Activated CD4-positive, alpha-beta memory T cell treated with anti-CD3 and anti-CD28 coated beads, Interleukin-2, amount 10 ng/mL, durations not matched to agents 7 days and 5 days (primary cell): ENCODE measurements at regions of chr11 and their contacts with region 1.

Region 1: DNA sequence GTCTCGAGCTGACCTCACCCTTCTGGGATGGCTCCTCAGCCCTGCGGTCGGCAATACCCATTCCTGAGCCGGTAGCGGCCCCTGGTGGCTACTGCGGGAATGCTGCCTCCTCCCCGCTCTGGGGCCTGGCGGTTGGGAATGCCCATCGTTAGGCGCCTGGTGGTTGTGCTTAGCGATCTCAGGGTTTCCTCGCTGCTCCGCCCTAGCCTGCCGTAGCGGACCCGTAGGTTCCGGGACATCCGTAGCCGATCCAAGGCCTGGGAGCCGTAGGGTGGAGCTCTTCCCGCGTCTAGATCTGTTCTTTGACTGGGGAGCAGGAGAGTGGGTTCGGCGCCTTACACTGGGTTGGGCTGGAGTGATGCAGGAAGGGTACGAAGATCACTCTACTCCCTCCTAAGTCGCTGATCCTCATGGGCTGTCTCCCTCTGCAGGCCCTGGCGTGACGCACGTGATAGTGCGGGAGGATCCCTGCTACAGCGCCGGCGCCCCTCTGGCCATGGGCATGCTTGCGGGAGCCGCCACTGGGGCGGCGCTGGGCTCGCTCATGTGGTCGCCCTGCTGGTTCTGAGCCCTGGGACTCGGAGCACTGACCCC is 14.8 kb downstream of the PLEKHB1 start:
- DNase-seq: peak; percentile 83
- H3K4me3 Mint-ChIP-seq: no peak overlapping the region
- H3K27ac Mint-ChIP-seq: no peak overlapping the region
- H3K4me1 Mint-ChIP-seq: peaks cover 7% of the 10 kb centered on the region
- H3K27me3 Mint-ChIP-seq: no peaks in the 10 kb centered on the region

Region 2: DNA sequence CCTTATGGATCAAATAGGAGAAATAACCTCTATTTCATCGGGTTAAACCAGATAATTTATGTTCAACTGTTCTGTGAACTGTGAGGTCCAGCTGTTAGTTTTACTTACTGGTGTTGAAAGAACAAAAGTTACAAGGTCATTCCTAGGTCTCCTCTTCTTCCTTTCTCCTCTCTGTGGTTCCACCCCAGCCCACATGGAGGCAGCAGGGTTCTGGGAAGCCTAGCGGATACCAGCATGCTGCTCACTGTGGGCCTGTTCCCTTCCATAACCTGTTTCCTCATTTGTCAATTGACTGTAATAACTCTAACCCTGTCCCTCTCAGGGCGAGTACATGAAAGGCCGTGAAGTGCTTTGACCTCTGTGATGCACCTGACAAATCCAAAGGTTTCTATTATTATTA is 257.1 kb before region 1 on chr11:
- CTCF ChIA-PET with region 1: interaction called, 13 read pairs
- POLR2A ChIA-PET with region 1: no interaction called
- DNase-seq: no peak
- H3K4me3 Mint-ChIP-seq: no peak overlapping the region
- H3K27ac Mint-ChIP-seq: no peak overlapping the region
- H3K4me1 Mint-ChIP-seq: no peaks in the 10 kb centered on the region
- H3K27me3 Mint-ChIP-seq: no peaks in the 10 kb centered on the region

Region 3: DNA sequence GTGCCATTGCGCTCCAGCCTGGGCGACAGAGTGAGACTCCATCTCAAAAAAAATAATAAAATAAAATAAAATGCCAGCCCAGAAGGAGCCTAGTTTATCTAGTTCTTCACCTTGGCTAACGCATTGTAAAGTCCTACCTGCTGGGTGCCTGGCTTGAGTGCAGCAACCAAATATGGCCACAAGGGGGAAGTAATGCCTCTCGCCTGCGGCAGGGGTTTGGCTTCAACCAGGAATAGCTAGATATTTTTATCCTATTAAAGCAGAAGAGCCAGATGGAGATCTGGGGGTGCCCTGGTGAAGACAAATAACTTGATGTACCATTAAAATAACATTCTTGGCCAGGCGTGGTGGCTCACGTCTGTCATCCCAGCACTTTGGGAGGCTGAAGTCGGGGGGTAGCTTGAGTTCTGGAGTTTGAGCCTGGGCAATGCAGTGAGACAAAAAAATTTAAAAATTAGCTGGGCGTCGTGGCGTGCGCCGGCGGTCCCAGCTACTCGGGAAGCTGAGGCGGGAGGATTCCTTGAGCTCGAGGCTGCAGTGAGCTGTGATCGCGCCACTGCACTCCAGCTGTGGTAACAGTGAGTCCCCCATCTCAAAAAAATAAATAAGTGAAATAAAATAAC is 35.3 kb before region 1 on chr11:
- CTCF ChIA-PET with region 1: interaction called, 126 read pairs
- POLR2A ChIA-PET with region 1: interaction called, 3 read pairs
- DNase-seq: peak; percentile 67
- H3K4me3 Mint-ChIP-seq: no peak overlapping the region
- H3K27ac Mint-ChIP-seq: no peak overlapping the region
- H3K4me1 Mint-ChIP-seq: peaks cover 2% of the 10 kb centered on the region
- H3K27me3 Mint-ChIP-seq: peaks cover 22% of the 10 kb centered on the region

Region 4: GRCh38 chr11:73647459-73648100 is 13.6 kb before region 1 on chr11:
- CTCF ChIA-PET with region 1: interaction called, 20 read pairs
- POLR2A ChIA-PET with region 1: no interaction called
- DNase-seq: peak; percentile 90
- H3K4me3 Mint-ChIP-seq: peak overlapping the region; percentile 64
- H3K27ac Mint-ChIP-seq: no peak overlapping the region
- H3K4me1 Mint-ChIP-seq: peaks cover 14% of the 10 kb centered on the region
- H3K27me3 Mint-ChIP-seq: no peaks in the 10 kb centered on the region

Region 5: DNA sequence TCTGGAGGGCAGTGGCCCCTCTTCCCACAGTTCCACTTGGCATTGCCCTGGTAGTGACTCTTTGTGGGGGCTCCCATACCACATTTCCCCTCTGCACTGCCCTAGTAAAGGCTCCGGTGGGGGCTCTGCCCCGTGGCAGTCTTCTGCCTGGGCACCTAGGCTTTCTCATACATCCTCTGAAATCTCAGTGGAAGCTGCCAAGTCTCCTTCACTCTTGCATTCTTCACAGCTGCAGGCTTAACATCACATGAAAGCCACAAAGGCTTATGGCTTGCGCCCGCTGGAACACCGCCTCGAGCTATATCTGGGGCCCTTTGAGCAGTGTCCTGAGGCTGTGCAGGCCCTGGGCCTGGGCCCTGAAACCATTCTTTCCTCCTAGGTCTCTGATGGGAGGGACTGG is 10.6 kb after region 1 on chr11:
- CTCF ChIA-PET with region 1: interaction called, 15 read pairs
- POLR2A ChIA-PET with region 1: interaction called, 4 read pairs
- DNase-seq: no peak
- H3K4me3 Mint-ChIP-seq: no peak overlapping the region
- H3K27ac Mint-ChIP-seq: no peak overlapping the region
- H3K4me1 Mint-ChIP-seq: no peaks in the 10 kb centered on the region
- H3K27me3 Mint-ChIP-seq: no peaks in the 10 kb centered on the region

Region 6: GRCh38 chr11:73680687-73681086 is 19.6 kb after region 1 on chr11:
- CTCF ChIA-PET with region 1: interaction called, 10 read pairs
- POLR2A ChIA-PET with region 1: interaction called, 3 read pairs
- DNase-seq: no peak
- H3K4me3 Mint-ChIP-seq: no peak overlapping the region
- H3K27ac Mint-ChIP-seq: no peak overlapping the region
- H3K4me1 Mint-ChIP-seq: no peaks in the 10 kb centered on the region
- H3K27me3 Mint-ChIP-seq: no peaks in the 10 kb centered on the region